ENCODE measurements at regions of chrX and their contacts with region 1.

Region 1: DNA sequence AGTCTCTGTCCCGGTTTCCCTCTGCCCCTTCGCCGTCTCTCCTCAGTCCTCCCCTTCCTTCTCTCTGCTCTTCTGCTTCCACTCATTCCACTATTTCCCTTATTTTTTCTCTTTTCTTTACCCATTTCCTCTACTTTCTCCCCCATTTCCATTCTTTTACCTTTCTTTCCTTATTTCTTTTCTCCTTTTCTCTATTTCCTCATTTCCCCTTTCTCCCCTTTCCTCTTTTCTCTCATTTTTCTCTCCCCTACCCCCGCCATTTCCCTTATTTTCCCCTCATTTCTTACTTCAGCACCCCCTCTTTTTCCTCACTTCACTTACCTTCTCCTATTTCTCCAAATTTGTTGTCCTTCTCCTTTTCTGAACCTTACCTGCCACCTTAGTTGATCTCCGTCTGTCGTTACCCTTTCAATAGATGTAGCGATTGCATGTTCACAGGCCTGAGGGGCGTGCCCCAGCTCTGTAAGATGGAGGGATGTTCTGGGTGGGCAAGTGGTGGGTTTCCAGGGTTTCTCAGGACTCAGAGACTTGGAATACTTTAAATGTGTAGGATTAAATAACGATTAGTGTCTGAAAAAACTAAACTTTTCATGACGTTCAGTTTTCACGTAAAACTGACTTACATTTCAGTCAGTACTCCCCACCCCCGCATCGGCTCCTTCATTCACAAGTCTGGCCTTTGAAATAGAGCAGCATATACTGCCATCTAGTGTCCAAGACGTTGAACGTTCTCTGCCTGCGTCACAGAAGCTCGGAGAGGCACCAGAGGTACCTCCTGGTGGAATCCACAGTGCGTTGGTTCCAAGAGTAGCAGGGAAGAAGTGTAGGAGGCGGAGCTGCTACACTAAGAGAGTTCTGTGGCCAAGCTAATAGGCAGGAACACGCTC is 641 bp upstream of the NCBP2L start:
- DNase-seq: peak; percentile 81
- H3K4me3 Mint-ChIP-seq: peak overlapping the region; percentile 81
- H3K27ac Mint-ChIP-seq: no peak overlapping the region
- H3K4me1 Mint-ChIP-seq: peaks cover 11% of the 10 kb centered on the region
- H3K27me3 Mint-ChIP-seq: peaks cover 35% of the 10 kb centered on the region

Region 2: GRCh38 chrX:107627838-107628661 is 148.8 kb before region 1 on chrX and contains the start of gene PRPS1:
- CTCF ChIA-PET with region 1: interaction called, 11 read pairs
- DNase-seq: peak; percentile 93
- H3K4me3 Mint-ChIP-seq: peak within 1 kb of the TSS; percentile 94
- H3K27ac Mint-ChIP-seq: peak within 1 kb of the TSS; percentile 93
- H3K4me1 Mint-ChIP-seq: peaks cover 31% of the 10 kb centered on the region
- H3K27me3 Mint-ChIP-seq: no peaks in the 10 kb centered on the region

Region 3: DNA sequence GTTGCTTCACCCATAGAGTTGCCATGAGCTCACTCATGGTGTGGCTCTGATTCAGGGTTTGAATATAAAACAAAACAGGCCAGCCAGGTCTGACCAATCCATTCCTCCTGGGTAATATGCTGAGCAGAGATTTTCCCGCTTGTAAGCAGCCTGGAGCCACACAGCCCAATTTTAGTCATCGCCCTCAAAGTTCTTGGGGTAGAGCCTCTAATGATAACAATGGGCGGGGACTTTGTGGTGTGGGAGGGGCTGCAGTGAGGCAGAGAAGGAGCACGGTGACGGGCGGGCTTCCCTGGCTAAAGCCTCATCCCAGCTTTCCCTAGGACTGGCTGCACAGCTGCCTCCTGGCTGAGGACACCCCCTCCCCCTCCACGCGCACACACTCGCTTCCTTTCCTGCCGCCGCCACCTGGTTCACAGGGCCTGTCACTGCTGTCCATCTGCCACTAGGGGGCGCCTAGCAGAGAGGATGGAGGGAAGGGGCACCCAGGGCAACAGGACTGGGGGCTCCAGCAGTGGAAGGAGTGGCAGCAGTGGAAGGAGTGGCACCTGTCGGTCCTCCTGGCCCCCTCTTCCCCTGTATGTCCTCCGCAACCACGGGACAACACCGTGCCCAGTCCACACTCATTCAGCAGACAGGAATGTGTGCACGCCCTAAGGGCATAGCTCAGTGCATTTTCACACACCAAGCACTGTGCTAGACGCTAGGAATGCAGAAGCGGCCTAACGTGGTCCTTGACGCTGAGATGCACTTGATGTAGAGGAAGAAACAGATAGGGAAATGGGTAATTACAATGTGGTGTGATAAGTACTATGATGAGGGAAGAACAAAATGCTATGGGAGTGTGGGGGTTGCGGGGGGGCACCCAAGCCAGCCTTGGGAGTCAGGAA is 121.8 kb before region 1 on chrX:
- CTCF ChIA-PET with region 1: interaction called, 134 read pairs
- DNase-seq: peak; percentile 74
- H3K4me3 Mint-ChIP-seq: peak overlapping the region; percentile 2
- H3K27ac Mint-ChIP-seq: no peak overlapping the region
- H3K4me1 Mint-ChIP-seq: peaks cover 11% of the 10 kb centered on the region
- H3K27me3 Mint-ChIP-seq: no peaks in the 10 kb centered on the region

Region 4: GRCh38 chrX:107716816-107717700 is 59.8 kb before region 1 on chrX:
- CTCF ChIA-PET with region 1: interaction called, 37 read pairs
- DNase-seq: peak; percentile 92
- H3K4me3 Mint-ChIP-seq: peak overlapping the region; percentile 92
- H3K27ac Mint-ChIP-seq: peak overlapping the region; percentile 96
- H3K4me1 Mint-ChIP-seq: peaks cover 56% of the 10 kb centered on the region
- H3K27me3 Mint-ChIP-seq: peaks cover 12% of the 10 kb centered on the region

Region 5: DNA sequence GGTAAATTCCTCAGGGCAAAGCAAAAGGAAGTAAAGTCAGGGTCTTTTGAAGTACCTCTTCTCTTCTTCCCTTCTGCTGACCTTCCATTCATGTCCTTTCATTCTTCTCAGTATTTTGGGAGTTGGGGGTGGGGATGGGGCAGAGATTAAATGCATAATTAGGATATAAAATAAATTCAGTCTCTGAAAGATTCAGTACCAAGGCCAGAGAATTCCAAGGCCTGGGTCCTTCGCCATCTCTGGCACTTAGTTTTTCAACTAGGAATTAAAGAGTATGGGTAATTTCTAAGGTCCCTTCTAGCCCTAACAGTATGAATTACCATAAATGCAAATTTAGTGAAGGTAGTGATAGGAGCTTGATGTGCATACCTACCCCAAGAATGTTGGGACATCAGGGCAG is 157.4 kb after region 1 on chrX:
- CTCF ChIA-PET with region 1: no interaction called
- DNase-seq: no peak
- H3K4me3 Mint-ChIP-seq: no peak overlapping the region
- H3K27ac Mint-ChIP-seq: no peak overlapping the region
- H3K4me1 Mint-ChIP-seq: no peaks in the 10 kb centered on the region
- H3K27me3 Mint-ChIP-seq: peaks cover 13% of the 10 kb centered on the region